CD4-positive, alpha-beta T cell (primary cell): ENCODE measurements at regions of chr2 and their contacts with region 1.

Region 1: GRCh38 chr2:170715062-170715931 is at the start of gene SP5:
- DNase-seq: peak in 6 of 14 experiments; percentile 18 to 68 (median 52)
- ATAC-seq: peak; percentile 54
- H3K4me3 ChIP-seq: peak within 1 kb of the TSS; percentile 59
- H3K4me3 Mint-ChIP-seq: peak within 1 kb of the TSS; percentile 83
- H3K27ac ChIP-seq: no peak within 1 kb of the TSS
- H3K27ac Mint-ChIP-seq: no peak within 1 kb of the TSS
- H3K4me1 ChIP-seq: peaks cover 65% of the 10 kb centered on the region
- H3K4me1 Mint-ChIP-seq: peaks cover 51% of the 10 kb centered on the region
- H3K27me3 ChIP-seq: peaks cover 62 to 92% of the 10 kb centered on the region in 2 experiments
- H3K27me3 Mint-ChIP-seq: peaks cover 79% of the 10 kb centered on the region
- CTCF ChIP-seq: no peak
- total RNA-seq, gene SP5: not detected

Region 2: GRCh38 chr2:170409164-170409535 is 306.1 kb before region 1 on chr2:
- CTCF ChIA-PET with region 1: no interaction called
- POLR2A ChIA-PET with region 1: no interaction called
- intact Hi-C with region 1: no loop called
- DNase-seq: peak; percentile 50 to 85 (median 70)
- ATAC-seq: peak; percentile 63
- H3K4me3 ChIP-seq: no peak overlapping the region
- H3K4me3 Mint-ChIP-seq: peak overlapping the region; percentile 34
- H3K27ac ChIP-seq: no peak overlapping the region
- H3K27ac Mint-ChIP-seq: no peak overlapping the region
- H3K4me1 ChIP-seq: peaks cover 6% of the 10 kb centered on the region
- H3K4me1 Mint-ChIP-seq: peaks cover 15% of the 10 kb centered on the region
- H3K27me3 ChIP-seq: peaks cover 8 to 30% of the 10 kb centered on the region in 2 experiments
- H3K27me3 Mint-ChIP-seq: peaks cover 44% of the 10 kb centered on the region
- CTCF ChIP-seq: peak; percentile 87

Region 3: DNA sequence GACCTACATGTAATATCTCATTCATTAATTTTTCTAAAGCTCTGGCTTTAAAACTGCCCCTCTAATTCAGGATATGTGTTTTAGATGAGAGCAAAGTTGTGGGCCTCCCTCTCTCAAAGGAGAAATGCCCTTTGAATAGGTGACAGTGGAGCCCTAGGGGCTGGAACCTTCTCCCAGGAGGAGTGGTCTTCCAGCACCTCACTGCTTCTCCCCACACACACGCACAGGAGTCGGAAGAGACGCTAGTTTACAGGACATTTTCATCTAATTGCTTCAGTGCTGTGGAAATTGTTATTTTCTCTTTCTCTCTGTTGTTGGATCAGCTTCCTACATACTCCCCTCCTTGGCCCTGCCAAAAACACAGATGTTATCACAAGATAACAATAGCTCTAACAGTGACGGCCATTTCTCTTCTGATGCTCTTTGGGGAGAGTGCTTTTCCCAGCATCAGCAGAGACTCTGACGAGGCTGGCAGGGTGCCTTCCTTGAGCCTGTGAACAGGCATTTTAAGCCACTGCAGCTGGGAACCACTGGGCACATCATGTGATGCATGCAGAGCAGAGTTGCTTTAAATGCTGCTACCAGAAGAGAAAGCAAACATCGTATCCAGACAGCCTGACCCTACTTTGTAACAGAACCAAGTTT is 209.5 kb before region 1 on chr2:
- CTCF ChIA-PET with region 1: no interaction called
- POLR2A ChIA-PET with region 1: no interaction called
- intact Hi-C with region 1: loop called in 1 of 2 experiments (anchors 5 kb)
- DNase-seq: peak in 1 of 14 experiments; percentile 4
- ATAC-seq: no peak
- H3K4me3 ChIP-seq: no peak overlapping the region
- H3K4me3 Mint-ChIP-seq: no peak overlapping the region
- H3K27ac ChIP-seq: no peak overlapping the region
- H3K27ac Mint-ChIP-seq: no peak overlapping the region
- H3K4me1 ChIP-seq: peaks cover 18% of the 10 kb centered on the region
- H3K4me1 Mint-ChIP-seq: peaks cover 40% of the 10 kb centered on the region
- H3K27me3 ChIP-seq: no peaks in the 10 kb centered on the region
- H3K27me3 Mint-ChIP-seq: peaks cover 19% of the 10 kb centered on the region
- CTCF ChIP-seq: no peak

Region 4: DNA sequence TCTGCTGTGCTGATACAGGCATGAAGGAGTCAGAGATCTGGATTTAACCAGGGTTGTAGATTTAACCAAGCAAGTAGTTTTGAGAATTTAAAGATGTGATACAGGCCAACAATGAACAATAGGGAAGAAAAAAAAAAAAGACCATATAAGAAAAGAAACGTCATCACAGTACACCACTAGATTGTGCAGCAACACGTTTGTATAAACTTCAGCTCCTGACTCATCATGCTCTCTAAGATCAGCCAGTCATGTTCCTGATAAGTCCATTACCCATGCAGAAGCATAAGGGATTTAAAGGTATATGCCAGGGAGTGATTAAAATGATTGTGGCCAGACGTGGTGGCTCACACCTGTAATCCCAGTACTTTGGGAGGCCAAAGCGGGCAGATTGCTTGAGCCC is 32.6 kb after region 1 on chr2:
- CTCF ChIA-PET with region 1: no interaction called
- POLR2A ChIA-PET with region 1: no interaction called
- intact Hi-C with region 1: no loop called
- DNase-seq: no peak
- ATAC-seq: no peak
- H3K4me3 ChIP-seq: no peak overlapping the region
- H3K4me3 Mint-ChIP-seq: no peak overlapping the region
- H3K27ac ChIP-seq: no peak overlapping the region
- H3K27ac Mint-ChIP-seq: no peak overlapping the region
- H3K4me1 ChIP-seq: no peaks in the 10 kb centered on the region
- H3K4me1 Mint-ChIP-seq: no peaks in the 10 kb centered on the region
- H3K27me3 ChIP-seq: peaks cover 3 to 8% of the 10 kb centered on the region in 2 experiments
- H3K27me3 Mint-ChIP-seq: peaks cover 39% of the 10 kb centered on the region
- CTCF ChIP-seq: no peak

Region 5: GRCh38 chr2:171492664-171493063 is 777.4 kb after region 1 on chr2:
- CTCF ChIA-PET with region 1: no interaction called
- POLR2A ChIA-PET with region 1: no interaction called
- intact Hi-C with region 1: no loop called
- DNase-seq: no peak
- ATAC-seq: no peak
- H3K4me3 ChIP-seq: no peak overlapping the region
- H3K4me3 Mint-ChIP-seq: no peak overlapping the region
- H3K27ac ChIP-seq: no peak overlapping the region
- H3K27ac Mint-ChIP-seq: no peak overlapping the region
- H3K4me1 ChIP-seq: no peaks in the 10 kb centered on the region
- H3K4me1 Mint-ChIP-seq: no peaks in the 10 kb centered on the region
- H3K27me3 ChIP-seq: no peaks in the 10 kb centered on the region
- H3K27me3 Mint-ChIP-seq: no peaks in the 10 kb centered on the region
- CTCF ChIP-seq: no peak